ENCODE measurements at regions of chr4 and their contacts with region 1.

Region 1: GRCh38 chr4:69874516-69874915 is 14.6 kb upstream of the SULT1E1 start:
- DNase-seq: no peak
- H3K4me3 ChIP-seq: no peak overlapping the region
- H3K27ac ChIP-seq: no peak overlapping the region
- H3K27me3 ChIP-seq: peaks cover 0 to 3% (median 0%) of the 10 kb centered on the region in 45 donors
- CTCF ChIP-seq: no peak

Region 2: GRCh38 chr4:69322055-69322454 is 552.5 kb before region 1 on chr4:
- intact Hi-C with region 1: loop called in 1 of 2 experiments (anchors 10 kb)
- DNase-seq: no peak
- H3K4me3 ChIP-seq: no peak overlapping the region
- H3K27ac ChIP-seq: no peak overlapping the region
- H3K27me3 ChIP-seq: no peaks in the 10 kb centered on the region
- CTCF ChIP-seq: no peak

Region 3: DNA sequence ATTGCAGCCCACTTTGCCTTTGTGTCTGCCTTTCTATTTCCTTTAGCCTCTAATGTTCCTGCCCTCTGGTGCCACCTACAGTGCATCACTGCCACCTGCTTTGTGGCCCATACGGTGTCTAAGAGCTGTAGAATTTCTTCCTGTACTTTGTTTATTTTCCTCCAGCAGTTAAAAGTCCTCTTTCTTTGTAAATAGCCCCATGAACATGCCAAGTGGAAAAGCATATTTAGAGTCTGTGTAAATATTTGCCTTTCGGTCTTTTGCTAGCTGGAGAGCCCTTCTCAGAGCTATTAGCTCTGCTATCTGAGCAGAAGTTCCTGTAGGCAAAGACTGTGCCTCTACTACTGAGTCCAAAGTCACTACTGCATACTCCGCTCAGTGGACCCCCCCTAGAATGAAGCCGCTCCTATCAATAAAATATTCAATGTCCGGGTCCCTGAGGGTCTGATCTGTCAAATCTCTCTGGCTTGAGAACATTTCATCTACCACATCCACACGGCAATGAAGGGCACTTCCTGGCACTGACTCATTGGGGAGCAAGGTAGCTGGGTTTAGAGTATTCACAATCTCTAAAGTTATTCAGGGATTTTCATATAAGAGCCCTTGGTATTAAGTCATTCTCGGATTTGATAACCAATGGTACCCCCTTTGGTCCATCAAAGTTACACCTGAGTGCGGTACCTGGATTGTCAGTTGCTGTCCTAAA is 50.9 kb before region 1 on chr4:
- intact Hi-C with region 1: no loop called
- DNase-seq: no peak
- H3K4me3 ChIP-seq: no peak overlapping the region
- H3K27ac ChIP-seq: no peak overlapping the region
- H3K27me3 ChIP-seq: no peaks in the 10 kb centered on the region
- CTCF ChIP-seq: peak in 16 of 56 donors; percentile 8 to 30 (median 20)